IMR-90 (cell line): ENCODE measurements at regions of chr22 and their contacts with region 1.

Region 1: DNA sequence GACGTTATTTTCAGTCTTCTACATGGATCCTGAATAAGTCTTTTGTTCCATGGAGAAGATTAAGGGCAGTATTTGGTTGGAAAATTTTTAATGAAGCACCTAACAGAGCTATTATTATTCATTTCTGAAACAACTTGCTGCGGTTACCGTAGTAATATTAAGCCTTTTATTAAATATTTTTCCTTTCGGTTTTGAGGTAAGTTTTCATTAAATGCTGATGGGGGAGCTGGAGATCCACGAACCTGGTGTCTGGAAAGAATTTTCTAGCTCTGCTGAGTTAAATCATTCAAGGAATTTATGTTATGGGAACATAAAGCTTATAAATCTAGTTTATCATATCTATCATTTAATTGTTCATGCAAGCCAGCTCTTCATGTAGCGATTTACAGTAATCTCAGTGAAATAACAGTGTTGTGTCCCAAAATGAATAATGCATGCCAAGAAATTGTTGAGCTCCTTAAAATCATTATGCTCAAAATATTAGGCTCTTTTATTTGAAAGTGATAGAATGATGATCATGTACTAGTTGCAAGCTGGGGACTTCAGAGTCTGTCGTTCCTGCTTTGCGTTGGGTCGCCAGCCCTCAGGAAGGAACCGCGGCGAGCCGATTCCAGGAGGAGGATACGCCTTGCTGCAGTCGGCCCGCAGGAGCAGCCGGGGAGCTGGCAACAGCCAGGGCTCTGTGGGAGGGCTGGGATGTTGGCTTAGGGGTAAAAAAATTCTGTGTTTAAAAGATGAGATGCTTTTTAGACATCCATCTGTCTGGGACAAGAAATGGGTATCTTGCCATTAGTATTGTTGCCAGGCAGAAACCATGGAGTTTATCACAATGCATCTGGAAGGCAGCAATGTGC is 83.1 kb downstream of the TBC1D22A start:
- DNase-seq: peak; percentile 63
- ATAC-seq: peak; percentile 15
- H3K4me3 ChIP-seq: no peak overlapping the region
- H3K27ac ChIP-seq: no peak overlapping the region
- H3K4me1 ChIP-seq: peaks cover 16% of the 10 kb centered on the region
- H3K27me3 ChIP-seq: no peaks in the 10 kb centered on the region
- CTCF ChIP-seq: peak; percentile 80
- POLR2A ChIP-seq: no peak
- RAD21 ChIP-seq: peak; percentile 83

Region 2: DNA sequence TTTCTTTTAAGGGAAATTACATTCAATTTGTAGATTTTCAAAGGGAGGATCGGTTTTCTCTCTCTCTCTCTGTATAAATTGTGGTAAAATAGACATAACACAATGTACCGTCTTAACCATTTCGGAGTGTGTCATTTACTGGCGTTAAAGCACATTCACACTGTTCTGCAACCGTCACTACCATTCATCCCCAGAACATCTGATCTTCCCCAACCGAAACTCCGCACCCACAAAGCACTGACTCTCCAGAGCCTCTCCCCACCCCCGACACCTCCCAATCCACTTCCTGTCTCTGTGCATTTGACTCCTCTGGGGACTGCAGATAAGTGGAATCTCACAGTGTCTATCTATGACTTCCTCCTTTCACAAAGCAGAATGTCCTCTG is 241.2 kb before region 1 on chr22:
- CTCF ChIA-PET with region 1: no interaction called
- POLR2A ChIA-PET with region 1: no interaction called
- dilution Hi-C with region 1: no loop called
- in situ Hi-C with region 1: no loop called
- intact Hi-C with region 1: no loop called
- DNase-seq: peak; percentile 12
- ATAC-seq: peak; percentile 57
- H3K4me3 ChIP-seq: no peak overlapping the region
- H3K27ac ChIP-seq: no peak overlapping the region
- H3K4me1 ChIP-seq: peaks cover 2% of the 10 kb centered on the region; the same call in 1 of the 2 replicates
- H3K27me3 ChIP-seq: no peaks in the 10 kb centered on the region
- CTCF ChIP-seq: no peak
- POLR2A ChIP-seq: no peak
- RAD21 ChIP-seq: no peak

Region 3: DNA sequence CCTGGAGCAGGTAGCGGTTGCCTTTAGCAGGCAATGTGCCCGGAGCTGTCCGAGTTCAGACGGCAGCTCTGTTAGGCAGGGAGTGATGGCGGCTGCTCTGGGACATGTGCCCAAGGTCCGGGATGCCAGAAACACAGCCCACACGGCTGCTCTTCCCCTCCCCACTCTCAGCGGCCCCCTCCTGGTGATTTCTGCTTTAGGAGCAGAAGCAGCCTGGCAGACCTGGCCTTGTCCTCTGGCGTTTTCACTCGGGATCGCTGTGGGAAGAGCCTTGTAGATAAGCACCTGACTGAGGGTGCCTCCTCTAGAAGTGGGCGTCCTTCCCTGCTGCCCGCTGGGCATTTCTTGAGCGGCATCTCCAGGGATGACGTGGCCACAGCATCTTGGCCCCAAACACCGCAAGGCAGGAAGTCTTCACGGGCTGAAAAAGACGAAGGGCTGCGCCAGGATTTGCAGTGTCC is 309.1 kb after region 1 on chr22:
- CTCF ChIA-PET with region 1: no interaction called
- POLR2A ChIA-PET with region 1: no interaction called
- dilution Hi-C with region 1: no loop called
- in situ Hi-C with region 1: no loop called
- intact Hi-C with region 1: loop called (anchors 10 kb)
- DNase-seq: peak; percentile 82
- ATAC-seq: peak; percentile 83
- H3K4me3 ChIP-seq: peak overlapping the region; percentile 19; the same call in 1 of the 2 replicates
- H3K27ac ChIP-seq: peak overlapping the region; percentile 19; the same call in 1 of the 2 replicates
- H3K4me1 ChIP-seq: peaks cover 16% of the 10 kb centered on the region
- H3K27me3 ChIP-seq: no peaks in the 10 kb centered on the region
- CTCF ChIP-seq: 0 out of 2 replicates have a peak, but pooled peaks have one; percentile 12
- POLR2A ChIP-seq: no peak
- RAD21 ChIP-seq: peak; percentile 21; the same call in 1 of the 2 replicates

Region 4: DNA sequence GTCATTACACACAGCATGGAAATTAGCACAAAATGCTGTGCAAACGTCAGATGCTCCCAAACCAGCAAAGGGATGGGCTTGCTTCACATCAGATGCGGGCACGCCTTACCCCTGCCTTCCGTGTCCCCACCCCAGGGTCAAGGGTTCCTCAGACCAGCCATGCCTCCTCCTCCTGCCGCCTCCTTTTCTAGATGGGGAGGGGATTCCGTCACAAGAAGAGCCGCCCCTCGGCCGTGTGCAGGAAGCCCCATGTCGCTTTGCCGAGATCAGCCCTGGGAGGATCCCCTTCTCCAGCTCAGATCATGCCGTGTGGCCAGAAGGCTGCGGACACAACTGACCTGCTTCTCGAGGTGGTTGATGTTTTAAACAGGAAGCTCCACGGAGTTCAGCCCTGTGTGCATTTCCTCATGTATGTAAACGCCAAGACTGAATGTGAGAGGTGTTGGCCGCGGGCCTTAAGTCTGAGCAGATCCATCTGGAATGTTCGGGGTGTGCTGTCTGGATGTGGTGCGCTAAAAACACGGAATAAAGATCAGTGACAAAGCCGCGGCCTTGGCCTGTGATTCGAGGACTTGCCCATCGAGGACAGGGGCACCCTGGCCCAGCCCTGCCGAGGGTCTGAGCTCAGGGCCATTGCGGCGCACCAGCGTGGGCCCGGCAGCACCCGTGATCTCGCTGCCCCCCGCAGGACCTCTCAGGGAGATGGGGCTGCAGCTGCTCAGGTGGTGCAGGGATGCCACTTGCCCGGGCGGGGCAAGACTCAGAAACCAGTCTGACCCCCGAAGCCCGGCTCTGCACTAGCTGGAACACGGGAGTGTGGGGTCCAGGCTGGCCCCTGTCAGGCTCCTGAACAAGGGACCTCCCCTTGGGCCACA is 329.9 kb after region 1 on chr22:
- CTCF ChIA-PET with region 1: no interaction called
- POLR2A ChIA-PET with region 1: no interaction called
- dilution Hi-C with region 1: no loop called
- in situ Hi-C with region 1: no loop called
- intact Hi-C with region 1: loop called (anchors 2 kb)
- DNase-seq: peak; percentile 88
- ATAC-seq: peak; percentile 88
- H3K4me3 ChIP-seq: no peak overlapping the region
- H3K27ac ChIP-seq: peak overlapping the region; percentile 46
- H3K4me1 ChIP-seq: peaks cover 10% of the 10 kb centered on the region
- H3K27me3 ChIP-seq: no peaks in the 10 kb centered on the region
- CTCF ChIP-seq: no peak
- POLR2A ChIP-seq: no peak
- RAD21 ChIP-seq: no peak